Sciatic nerve (tissue), 2 donors: ENCODE measurements at regions of chr17 and their contacts with region 1.

Region 1: DNA sequence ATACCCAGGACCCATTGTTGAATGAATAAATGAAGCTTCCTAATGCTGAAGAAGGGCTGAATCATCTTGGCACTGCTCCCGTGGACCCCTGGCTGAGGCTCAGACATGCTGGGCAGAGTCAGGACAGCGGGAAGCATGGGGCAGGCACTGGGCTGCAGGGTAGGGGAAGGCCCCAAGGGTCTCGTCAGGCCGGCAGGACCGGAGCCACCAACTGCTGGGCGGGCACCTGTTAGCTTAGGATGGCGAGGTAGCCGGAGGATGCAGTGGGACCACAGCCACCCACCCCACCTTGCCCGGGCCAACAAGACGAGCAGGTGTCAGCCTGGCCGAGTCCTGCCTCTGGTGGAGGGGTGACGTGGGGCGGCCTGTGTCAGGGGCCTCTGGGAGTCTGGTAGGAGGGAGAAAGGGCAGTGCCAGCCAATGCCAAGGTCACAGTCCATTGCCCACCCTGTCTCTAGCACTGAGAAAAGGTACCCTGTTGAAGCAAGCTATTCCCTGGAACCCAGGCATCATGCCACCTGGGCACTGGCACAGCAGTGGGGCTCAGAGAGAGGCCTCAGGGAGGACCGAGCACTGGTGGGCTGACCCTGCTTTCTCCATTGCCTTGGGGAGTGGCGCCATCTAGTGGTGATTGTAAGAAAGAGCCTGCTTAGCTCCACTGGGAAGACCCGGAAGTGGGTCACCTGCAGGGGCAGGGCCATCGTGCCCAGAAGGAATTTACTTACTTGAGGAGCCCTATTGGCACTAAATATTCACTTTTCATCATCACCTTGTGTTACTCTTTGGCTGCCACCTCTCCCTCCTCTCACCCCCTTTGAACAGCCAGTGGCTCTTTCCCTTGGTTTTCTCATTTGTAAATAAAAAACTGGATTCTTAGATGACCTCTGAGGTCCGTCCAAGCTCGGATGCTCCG is 3.0 kb upstream of the DLX3 start:
- DNase-seq: peak; percentile 85
- ATAC-seq: peak; percentile 77

Region 2: GRCh38 chr17:49707608-49708514 is 290.2 kb before region 1 on chr17 and contains the start of gene SLC35B1:
- intact Hi-C with region 1: loop called (anchors 5 kb)
- DNase-seq: peak; percentile 99
- ATAC-seq: peak; percentile 100
- total RNA-seq, gene SLC35B1: 36.9 TPM

Region 3: GRCh38 chr17:49861150-49861892 is 136.7 kb before region 1 on chr17:
- intact Hi-C with region 1: loop called (anchors 5 kb)
- DNase-seq: peak; percentile 67
- ATAC-seq: peak; percentile 16

Region 4: GRCh38 chr17:49880291-49881053 is 117.6 kb before region 1 on chr17:
- intact Hi-C with region 1: loop called (anchors 5 kb)
- DNase-seq: peak; percentile 82
- ATAC-seq: peak; percentile 90

Region 5: DNA sequence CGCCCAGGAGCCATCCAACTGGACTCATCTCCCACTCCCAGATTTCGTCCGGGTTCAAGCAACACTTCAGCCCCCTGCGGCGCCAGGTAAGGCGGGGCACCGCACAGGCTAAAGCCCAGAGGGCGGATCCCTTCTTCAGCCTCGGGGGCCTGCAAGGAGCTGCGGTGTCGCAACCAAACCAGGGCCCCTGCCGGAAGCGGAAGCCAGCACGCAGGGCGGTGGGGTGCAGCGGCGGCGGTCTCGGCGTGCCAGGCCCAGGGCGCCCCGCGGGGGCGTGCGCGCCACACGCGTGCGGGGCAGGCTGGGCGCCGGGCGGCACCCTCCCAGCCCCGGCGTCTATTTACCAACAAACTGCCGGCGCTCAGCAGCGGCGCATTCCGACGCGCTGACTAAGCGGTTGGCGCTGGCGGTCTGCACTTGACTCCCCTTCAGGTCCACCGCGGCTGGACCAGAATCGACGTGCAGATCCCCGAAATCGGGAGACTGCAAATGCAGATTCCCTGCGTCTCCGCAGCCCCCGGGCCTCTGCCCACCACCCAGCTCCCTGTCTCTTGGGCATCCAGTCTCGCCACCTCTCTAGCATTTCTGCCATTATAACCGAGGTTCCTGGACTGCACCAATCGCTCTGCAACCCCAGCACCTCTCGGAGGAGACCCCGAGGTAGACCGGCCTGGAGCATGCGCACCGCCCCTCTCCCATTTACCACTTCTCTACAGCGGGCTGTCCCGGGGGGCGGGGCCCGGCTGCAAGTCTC is 29.5 kb before region 1 on chr17:
- intact Hi-C with region 1: no loop called
- DNase-seq: no peak
- ATAC-seq: peak; percentile 61

Region 6: GRCh38 chr17:50234581-50234980 is 236.5 kb after region 1 on chr17:
- intact Hi-C with region 1: no loop called
- DNase-seq: no peak
- ATAC-seq: no peak

Region 7: GRCh38 chr17:50845240-50846147 is 847.4 kb after region 1 on chr17:
- intact Hi-C with region 1: no loop called
- DNase-seq: no peak
- ATAC-seq: no peak